Activated naive CD4-positive, alpha-beta T cell treated with anti-CD3 and anti-CD28 coated beads for 36 hours (primary cell): ENCODE measurements at regions of chr6 and their contacts with region 1.

Region 1: GRCh38 chr6:150600301-150601017 is 774 bp downstream of the PLEKHG1 start:
- DNase-seq: peak; percentile 87
- H3K4me3 Mint-ChIP-seq: peak overlapping the region; percentile 84
- H3K27ac Mint-ChIP-seq: peak overlapping the region; percentile 90
- H3K4me1 Mint-ChIP-seq: peaks cover 25% of the 10 kb centered on the region
- H3K27me3 Mint-ChIP-seq: peaks cover 46% of the 10 kb centered on the region

Region 2: DNA sequence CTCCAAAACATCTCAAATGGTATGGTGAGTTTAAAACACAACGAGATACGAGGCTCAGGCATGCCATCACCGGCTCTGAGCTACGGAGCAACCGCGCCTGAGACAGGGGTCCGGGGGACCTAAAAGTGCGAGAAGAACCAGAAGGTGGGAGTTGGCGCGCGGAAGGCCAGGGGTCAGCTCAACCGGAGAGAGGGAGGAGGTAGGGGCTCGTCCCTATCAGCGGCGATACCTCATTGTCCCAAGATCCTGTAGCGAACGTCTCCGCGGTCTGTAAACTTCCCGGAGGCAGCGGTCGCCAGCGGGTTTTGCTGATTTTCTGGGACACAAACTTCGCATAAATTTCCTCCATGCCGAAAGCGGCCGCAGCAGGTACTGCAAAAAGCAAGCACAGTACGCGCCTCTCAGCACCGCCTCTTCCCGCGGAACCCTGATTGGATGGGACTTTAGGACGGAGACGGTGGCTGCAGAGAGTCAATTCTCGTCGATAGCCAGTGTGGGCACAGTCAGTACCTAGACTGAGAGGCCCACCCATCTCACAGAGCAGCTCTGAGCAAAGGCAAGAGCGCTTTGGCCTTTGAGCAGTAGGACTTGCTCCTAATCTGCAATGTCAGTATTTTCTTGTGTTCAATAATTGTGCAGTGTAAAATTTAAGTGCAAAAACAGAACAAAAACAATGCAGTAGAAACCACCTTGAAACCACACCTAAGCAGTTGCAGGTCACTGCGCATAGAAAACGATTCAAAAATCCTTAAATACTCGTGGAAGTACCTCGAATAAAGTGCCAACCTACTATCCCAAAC is 854.1 kb before region 1 on chr6 and contains the start of gene NUP43:
- CTCF ChIA-PET with region 1: no interaction called
- intact Hi-C with region 1: no loop called
- DNase-seq: peak; percentile 99
- H3K4me3 Mint-ChIP-seq: peak within 1 kb of the TSS; percentile 99
- H3K27ac Mint-ChIP-seq: peak within 1 kb of the TSS; percentile 87
- H3K4me1 Mint-ChIP-seq: peaks cover 31% of the 10 kb centered on the region
- H3K27me3 Mint-ChIP-seq: no peaks in the 10 kb centered on the region
- total RNA-seq, gene NUP43: 68.1 to 71.9 TPM

Region 3: DNA sequence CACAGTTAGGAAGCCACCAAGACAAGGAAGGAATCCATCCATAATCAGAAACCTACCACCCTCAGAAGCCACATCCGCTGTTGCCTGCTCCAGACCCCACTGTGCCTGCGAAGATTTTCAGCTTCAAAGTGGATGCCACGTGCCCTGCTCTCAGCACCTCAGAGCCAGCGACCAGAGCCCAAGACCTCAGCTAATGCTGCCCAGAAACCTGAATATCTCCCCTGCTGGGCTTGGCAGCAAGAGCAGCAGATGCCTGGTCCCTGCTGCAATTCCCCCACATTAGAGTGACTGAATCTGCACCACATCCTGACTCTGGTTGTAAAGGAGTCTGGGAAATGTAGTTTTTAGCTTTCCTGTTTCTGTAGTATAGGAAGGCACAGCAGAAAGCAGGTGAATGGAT is 520.9 kb before region 1 on chr6:
- CTCF ChIA-PET with region 1: no interaction called
- intact Hi-C with region 1: loop called (anchors 5 kb)
- DNase-seq: peak; percentile 35
- H3K4me3 Mint-ChIP-seq: no peak overlapping the region
- H3K27ac Mint-ChIP-seq: no peak overlapping the region
- H3K4me1 Mint-ChIP-seq: peaks cover 10% of the 10 kb centered on the region
- H3K27me3 Mint-ChIP-seq: peaks cover 2% of the 10 kb centered on the region

Region 4: DNA sequence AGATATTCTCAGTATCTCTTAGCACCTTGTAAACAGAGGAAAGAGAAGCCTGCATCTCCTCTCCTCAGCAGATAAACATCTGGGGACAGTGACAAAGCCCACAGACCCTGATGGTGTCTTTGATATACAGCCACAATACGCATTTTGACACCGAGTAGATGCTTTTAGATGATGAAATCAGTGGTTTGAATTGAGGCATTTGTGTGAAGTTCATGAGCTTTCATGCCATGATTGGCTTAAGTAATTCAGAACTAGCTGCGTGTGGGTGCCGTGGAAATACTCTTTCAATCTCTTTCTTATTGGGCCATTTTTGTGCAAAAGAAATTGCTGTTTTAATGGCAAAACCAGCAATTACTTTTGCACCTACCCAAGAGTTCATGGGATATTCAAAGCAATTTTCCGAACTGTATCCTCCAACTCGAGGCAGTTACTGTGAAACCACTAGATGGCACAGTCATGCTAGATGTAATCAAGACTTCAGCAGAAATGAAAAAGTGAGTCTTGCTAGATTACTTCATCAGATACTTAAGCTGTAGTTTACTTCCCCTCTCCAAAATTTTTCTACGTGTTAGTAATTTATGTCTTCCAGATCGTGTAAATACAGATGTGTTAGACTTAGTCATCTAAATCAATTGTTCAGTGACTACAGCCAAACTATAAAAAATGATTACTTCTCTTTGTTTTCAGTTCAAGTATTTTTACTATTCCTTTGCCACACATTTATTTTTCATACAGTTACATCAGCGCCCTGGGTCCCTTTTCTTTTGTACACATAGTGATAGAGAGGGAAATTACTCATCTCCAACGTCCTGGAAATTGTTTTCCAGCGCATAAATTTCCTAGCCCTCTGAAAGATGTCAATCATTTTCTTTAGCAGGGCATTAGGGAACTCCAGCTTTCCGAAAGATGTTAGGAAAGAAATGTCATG is 182.3 kb before region 1 on chr6:
- CTCF ChIA-PET with region 1: interaction called, 29 read pairs
- intact Hi-C with region 1: loop called (anchors 1 kb)
- DNase-seq: peak; percentile 52
- H3K4me3 Mint-ChIP-seq: peak overlapping the region; percentile 59
- H3K27ac Mint-ChIP-seq: peak overlapping the region; percentile 72
- H3K4me1 Mint-ChIP-seq: peaks cover 24% of the 10 kb centered on the region
- H3K27me3 Mint-ChIP-seq: peaks cover 15% of the 10 kb centered on the region

Region 5: GRCh38 chr6:150528648-150529285 is 71.7 kb before region 1 on chr6:
- CTCF ChIA-PET with region 1: no interaction called
- intact Hi-C with region 1: no loop called
- DNase-seq: no peak
- H3K4me3 Mint-ChIP-seq: no peak overlapping the region
- H3K27ac Mint-ChIP-seq: no peak overlapping the region
- H3K4me1 Mint-ChIP-seq: no peaks in the 10 kb centered on the region
- H3K27me3 Mint-ChIP-seq: peaks cover 8% of the 10 kb centered on the region

Region 6: DNA sequence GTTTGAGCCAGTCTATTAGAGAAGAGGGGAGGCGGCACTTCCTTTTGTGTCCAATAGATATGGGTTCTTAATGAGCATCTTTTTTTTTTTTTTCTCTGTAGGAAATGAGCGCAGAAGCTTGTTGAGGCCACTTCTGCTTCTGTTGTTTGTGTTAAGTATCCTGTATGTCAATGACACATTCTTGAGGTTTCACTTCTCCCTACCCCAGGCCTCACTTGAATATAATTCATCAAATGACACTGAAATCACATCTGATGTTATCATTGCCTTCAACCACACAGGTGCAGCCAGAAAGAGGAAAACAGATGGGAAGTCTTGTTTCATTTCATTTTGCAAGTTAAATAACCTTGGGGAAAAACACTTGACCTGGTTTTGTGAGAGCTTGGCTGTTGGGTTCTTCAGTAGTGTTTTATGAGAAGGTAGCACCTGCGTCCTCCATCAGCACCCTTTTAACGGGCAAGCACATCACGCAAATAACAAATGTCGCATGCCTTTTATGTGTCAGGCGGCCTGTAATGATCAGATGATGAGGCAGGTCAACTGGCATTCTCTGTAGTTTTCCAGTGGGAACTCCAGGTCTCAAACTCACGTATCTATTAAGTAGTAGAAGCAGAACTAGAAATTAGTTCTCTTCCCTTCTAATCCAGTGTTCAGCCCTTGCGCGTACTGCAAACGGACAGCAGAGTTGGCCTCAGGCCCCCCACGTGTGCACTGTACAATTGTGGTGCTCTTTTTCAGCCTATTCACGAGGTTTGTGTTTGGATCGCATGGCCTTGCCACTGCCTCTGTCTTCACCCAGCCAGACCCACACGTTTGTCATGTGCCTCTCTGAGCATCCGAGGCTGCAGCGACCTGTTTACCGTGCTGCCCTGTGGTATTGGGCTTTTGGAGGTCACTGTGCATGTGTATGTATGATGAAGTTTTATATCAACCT is 22.7 kb after region 1 on chr6:
- CTCF ChIA-PET with region 1: no interaction called
- intact Hi-C with region 1: loop called (anchors 1 kb)
- DNase-seq: peak; percentile 18
- H3K4me3 Mint-ChIP-seq: no peak overlapping the region
- H3K27ac Mint-ChIP-seq: peak overlapping the region; percentile 3
- H3K4me1 Mint-ChIP-seq: peaks cover 17% of the 10 kb centered on the region
- H3K27me3 Mint-ChIP-seq: peaks cover 40% of the 10 kb centered on the region

Region 7: GRCh38 chr6:150830439-150831165 is 230.1 kb after region 1 on chr6:
- CTCF ChIA-PET with region 1: no interaction called
- intact Hi-C with region 1: no loop called
- DNase-seq: no peak
- H3K4me3 Mint-ChIP-seq: no peak overlapping the region
- H3K27ac Mint-ChIP-seq: no peak overlapping the region
- H3K4me1 Mint-ChIP-seq: no peaks in the 10 kb centered on the region
- H3K27me3 Mint-ChIP-seq: no peaks in the 10 kb centered on the region

Region 8: GRCh38 chr6:150865406-150866146 is 265.1 kb after region 1 on chr6 and contains the start of gene MTHFD1L:
- CTCF ChIA-PET with region 1: no interaction called
- intact Hi-C with region 1: loop called (anchors 1 kb)
- DNase-seq: peak; percentile 79
- H3K4me3 Mint-ChIP-seq: peak within 1 kb of the TSS; percentile 96
- H3K27ac Mint-ChIP-seq: peak within 1 kb of the TSS; percentile 91
- H3K4me1 Mint-ChIP-seq: peaks cover 30% of the 10 kb centered on the region
- H3K27me3 Mint-ChIP-seq: peaks cover 15% of the 10 kb centered on the region
- total RNA-seq, gene MTHFD1L: 181 to 194 TPM